Activated CD4-positive, alpha-beta T cell treated with anti-CD3 and anti-CD28 coated beads, Interleukin-2, amount 10 ng/mL, durations not matched to agents 24 days and 14 days (primary cell): ENCODE measurements at regions of chr16 and their contacts with region 1.

Region 1: GRCh38 chr16:23952128-23952970 is 116.6 kb downstream of the PRKCB start:
- DNase-seq: no peak
- H3K4me3 Mint-ChIP-seq: peak overlapping the region; percentile 54
- H3K27ac Mint-ChIP-seq: peak overlapping the region; percentile 68
- H3K4me1 Mint-ChIP-seq: peaks cover 62% of the 10 kb centered on the region
- H3K27me3 Mint-ChIP-seq: no peaks in the 10 kb centered on the region

Region 2: GRCh38 chr16:23803591-23804123 is 148.7 kb before region 1 on chr16:
- intact Hi-C with region 1: no loop called
- DNase-seq: peak; percentile 92
- H3K4me3 Mint-ChIP-seq: peak overlapping the region; percentile 29
- H3K27ac Mint-ChIP-seq: peak overlapping the region; percentile 16
- H3K4me1 Mint-ChIP-seq: peaks cover 18% of the 10 kb centered on the region
- H3K27me3 Mint-ChIP-seq: peaks cover 13% of the 10 kb centered on the region

Region 3: GRCh38 chr16:23863511-23864422 is 88.6 kb before region 1 on chr16:
- intact Hi-C with region 1: loop called (anchors 5 kb)
- DNase-seq: peak; percentile 83
- H3K4me3 Mint-ChIP-seq: peak overlapping the region; percentile 80
- H3K27ac Mint-ChIP-seq: peak overlapping the region; percentile 90
- H3K4me1 Mint-ChIP-seq: peaks cover 62% of the 10 kb centered on the region
- H3K27me3 Mint-ChIP-seq: no peaks in the 10 kb centered on the region